ENCODE measurements at regions of chr14 and their contacts with region 1.

Region 1: DNA sequence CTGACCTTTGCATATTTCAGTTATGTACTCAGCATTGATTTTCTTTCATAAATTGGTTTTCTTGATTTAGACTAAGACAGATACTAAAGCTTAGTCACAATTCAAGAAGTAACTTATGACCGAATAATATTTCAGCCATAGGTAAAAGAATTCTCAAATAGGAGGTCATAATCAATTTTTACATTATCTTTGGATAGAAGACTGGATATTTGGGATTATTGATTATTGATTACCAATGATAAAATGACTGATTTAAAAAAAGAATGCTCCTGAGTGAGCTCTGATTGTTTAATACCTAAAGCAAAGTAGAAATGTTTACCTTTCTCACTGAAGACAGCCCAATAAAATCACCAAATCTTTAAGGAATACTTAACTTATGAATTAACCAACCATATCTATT is 1631.5 kb upstream of the SEL1L start:
- DNase-seq: no peak

Region 2: GRCh38 chr14:82872494-82872893 is 292.6 kb before region 1 on chr14:
- intact Hi-C with region 1: no loop called
- DNase-seq: no peak

Region 3: GRCh38 chr14:83312511-83312910 is 147.4 kb after region 1 on chr14:
- intact Hi-C with region 1: no loop called
- DNase-seq: no peak

Region 4: DNA sequence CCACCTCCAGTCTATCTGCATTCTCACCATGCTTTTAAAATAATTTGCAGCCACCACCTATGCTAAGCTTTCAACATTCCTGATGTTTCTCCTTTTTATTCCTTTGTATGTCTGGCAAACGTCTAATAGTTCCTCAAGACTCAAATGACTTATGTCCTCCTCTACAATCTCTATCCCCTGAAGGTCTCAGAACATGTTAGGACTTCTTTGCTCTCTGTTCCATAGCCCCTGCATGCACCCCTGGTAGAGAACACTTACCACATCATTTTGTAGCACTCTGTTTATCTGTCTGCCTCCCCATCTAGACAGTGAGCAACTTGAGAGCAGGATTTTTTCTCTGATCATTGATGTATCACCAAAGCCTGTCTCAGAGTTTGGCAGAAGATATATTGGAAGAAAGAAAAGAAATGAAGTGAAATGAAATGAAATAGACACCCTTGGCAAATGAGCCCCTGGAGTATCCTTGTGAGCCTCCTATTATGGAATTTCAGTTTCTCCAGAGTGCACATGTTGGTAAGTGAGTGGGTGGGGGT is 1133.6 kb after region 1 on chr14:
- intact Hi-C with region 1: loop called in 1 of 2 experiments (anchors 5 kb)
- DNase-seq: no peak

Measured in posterior vena cava (tissue), 2 donors.